Posterior vena cava (tissue), 2 donors: ENCODE measurements at regions of chr16 and their contacts with region 1.

Region 1: DNA sequence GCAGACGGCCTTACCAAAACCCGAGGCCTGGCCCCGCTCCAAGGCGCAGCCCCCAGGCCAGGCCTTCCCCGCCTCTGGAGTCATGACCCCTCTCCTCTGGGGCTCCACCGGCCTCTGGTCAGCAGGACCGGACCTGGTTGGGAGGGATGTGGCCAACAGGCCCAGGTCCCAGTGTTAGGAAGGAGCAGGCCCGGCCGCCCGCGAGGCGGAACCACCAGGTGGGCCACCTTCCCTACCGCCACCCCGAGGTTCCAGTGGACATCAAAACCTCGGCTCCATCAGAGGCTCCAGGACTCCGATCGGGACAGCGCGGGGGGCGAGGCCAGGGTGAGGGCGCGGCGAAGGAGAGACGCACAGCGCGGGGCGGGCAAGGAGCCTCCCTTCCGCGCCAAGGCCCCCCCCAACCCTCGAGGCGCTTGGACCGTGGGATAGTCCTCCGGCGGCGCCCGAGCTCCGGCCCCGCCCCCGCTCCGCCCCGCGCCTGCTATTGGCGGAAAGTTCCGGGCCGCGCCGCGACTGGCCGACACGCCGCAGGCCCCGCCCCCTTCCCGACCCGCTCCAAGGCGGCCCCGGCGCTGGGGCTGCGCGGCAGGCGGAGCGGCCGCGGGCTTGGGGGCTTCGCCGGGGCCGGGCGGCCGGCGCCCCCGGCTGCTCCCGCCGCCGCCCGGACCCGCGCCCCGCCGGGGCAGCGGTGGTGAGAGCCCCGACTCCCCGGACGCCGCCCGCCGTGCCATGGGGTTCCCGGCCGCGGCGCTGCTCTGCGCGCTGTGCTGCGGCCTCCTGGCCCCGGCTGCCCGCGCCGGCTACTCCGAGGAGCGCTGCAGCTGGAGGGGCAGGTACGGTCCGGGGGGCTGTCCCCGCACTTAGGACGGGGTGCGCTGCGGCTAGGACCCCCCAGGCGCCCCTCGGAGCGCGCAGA is at the start of gene METRN:
- DNase-seq: peak; percentile 96
- total RNA-seq, gene METRN: 21.6 to 24.9 TPM

Region 2: GRCh38 chr16:471353-472198 is 243.2 kb before region 1 on chr16:
- intact Hi-C with region 1: no loop called
- DNase-seq: no peak

Region 3: GRCh38 chr16:760545-761343 is 45.9 kb after region 1 on chr16 and contains the start of gene MSLN:
- intact Hi-C with region 1: no loop called
- DNase-seq: no peak
- total RNA-seq, gene MSLN: 0.29 to 0.37 TPM

Region 4: GRCh38 chr16:788394-789126 is 73.7 kb after region 1 on chr16 and contains the start of gene CHTF18:
- intact Hi-C with region 1: loop called (anchors 5 kb)
- DNase-seq: peak; percentile 97
- total RNA-seq, gene CHTF18: 7.7 TPM